ENCODE measurements at regions of chr9 and their contacts with region 1.

Region 1: GRCh38 chr9:100098887-100099721 is at the starts of genes ERP44 and INVS:
- DNase-seq: peak; percentile 82 to 98 (median 94)
- ATAC-seq: peak; percentile 99
- H3K4me3 ChIP-seq: peak within 1 kb of the TSS; percentile 93
- H3K4me3 Mint-ChIP-seq: peak within 1 kb of the TSS; percentile 94 to 100 (median 98)
- H3K27ac ChIP-seq: peak within 1 kb of the TSS; percentile 89
- H3K27ac Mint-ChIP-seq: peak within 1 kb of the TSS; percentile 84 to 99 (median 97)
- H3K4me1 ChIP-seq: peaks cover 18 to 25% of the 10 kb centered on the region in 2 donors
- H3K4me1 Mint-ChIP-seq: peaks cover 26 to 53% (median 43%) of the 10 kb centered on the region in 7 donors
- H3K27me3 ChIP-seq: no peaks in the 10 kb centered on the region
- H3K27me3 Mint-ChIP-seq: no peaks in the 10 kb centered on the region
- total RNA-seq, gene ERP44: 9.8 to 19.5 (median 15.2) TPM
- total RNA-seq, gene INVS: 15.0 to 20.8 (median 20.6) TPM

Region 2: GRCh38 chr9:100028201-100028784 is 70.8 kb before region 1 on chr9:
- CTCF ChIA-PET with region 1: no interaction called
- POLR2A ChIA-PET with region 1: no interaction called
- intact Hi-C with region 1: loop called in 1 of 2 experiments (anchors 2 kb)
- DNase-seq: peak; percentile 21 to 66 (median 45)
- ATAC-seq: peak; percentile 98
- H3K4me3 ChIP-seq: no peak overlapping the region
- H3K4me3 Mint-ChIP-seq: no peak overlapping the region
- H3K27ac ChIP-seq: no peak overlapping the region
- H3K27ac Mint-ChIP-seq: peak overlapping the region in 1 of 9 donors; percentile 0
- H3K4me1 ChIP-seq: no peaks in the 10 kb centered on the region
- H3K4me1 Mint-ChIP-seq: peaks cover 4 to 12% (median 9%) of the 10 kb centered on the region in 7 donors
- H3K27me3 ChIP-seq: no peaks in the 10 kb centered on the region
- H3K27me3 Mint-ChIP-seq: no peaks in the 10 kb centered on the region

Region 3: GRCh38 chr9:100058699-100059579 is 40.2 kb before region 1 on chr9:
- CTCF ChIA-PET with region 1: no interaction called
- POLR2A ChIA-PET with region 1: no interaction called
- intact Hi-C with region 1: loop called in 1 of 2 experiments (anchors 10 kb)
- DNase-seq: no peak
- ATAC-seq: no peak
- H3K4me3 ChIP-seq: no peak overlapping the region
- H3K4me3 Mint-ChIP-seq: no peak overlapping the region
- H3K27ac ChIP-seq: no peak overlapping the region
- H3K27ac Mint-ChIP-seq: no peak overlapping the region
- H3K4me1 ChIP-seq: no peaks in the 10 kb centered on the region
- H3K4me1 Mint-ChIP-seq: peaks cover 2 to 22% (median 8%) of the 10 kb centered on the region in 7 donors
- H3K27me3 ChIP-seq: no peaks in the 10 kb centered on the region
- H3K27me3 Mint-ChIP-seq: no peaks in the 10 kb centered on the region

Region 4: DNA sequence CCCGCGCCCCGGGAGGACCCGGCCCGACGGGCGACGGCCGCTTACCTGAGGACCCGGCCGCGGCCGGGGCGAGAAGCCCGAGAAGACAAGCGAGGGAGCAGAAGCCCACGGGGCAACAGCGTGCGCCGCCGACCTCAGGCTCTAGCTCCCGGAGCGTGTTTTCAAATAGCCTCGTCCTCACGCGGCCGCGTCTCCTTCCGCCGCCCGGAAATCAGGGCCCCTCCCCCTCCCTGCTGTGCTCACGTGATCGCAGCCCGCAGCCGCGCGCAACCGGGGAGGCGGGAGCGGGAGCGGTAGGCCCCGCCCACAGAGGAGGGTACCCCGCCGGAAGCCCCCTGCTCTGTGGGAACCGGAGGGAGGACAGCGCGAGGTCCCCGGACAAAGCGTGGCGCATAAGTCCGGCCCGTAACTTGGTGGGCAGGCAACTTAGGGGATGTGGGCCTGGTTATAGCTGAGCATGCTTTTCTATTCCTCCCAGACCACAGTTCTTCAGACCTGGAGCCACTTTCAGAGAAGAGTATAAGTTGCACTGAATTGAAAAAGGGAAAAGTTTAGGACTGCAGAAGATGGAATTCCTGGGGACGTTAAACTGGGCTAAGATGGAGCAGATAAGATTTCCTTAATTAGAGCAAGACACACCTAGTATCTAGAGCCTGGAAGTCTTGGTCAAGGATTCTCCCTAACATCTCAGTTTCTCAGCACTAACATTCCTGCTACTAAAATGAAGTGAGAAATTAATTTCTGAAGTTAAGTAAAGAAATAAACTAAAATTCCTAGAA is 253.8 kb after region 1 on chr9 and contains the start of gene TEX10:
- CTCF ChIA-PET with region 1: no interaction called
- POLR2A ChIA-PET with region 1: no interaction called
- intact Hi-C with region 1: loop called (anchors 1 to 10 kb)
- DNase-seq: peak; percentile 80 to 94 (median 87)
- ATAC-seq: peak; percentile 96
- H3K4me3 ChIP-seq: peak within 1 kb of the TSS; percentile 79
- H3K4me3 Mint-ChIP-seq: peak within 1 kb of the TSS; percentile 87 to 99 (median 94)
- H3K27ac ChIP-seq: peak within 1 kb of the TSS; percentile 82
- H3K27ac Mint-ChIP-seq: peak within 1 kb of the TSS; percentile 77 to 94 (median 86)
- H3K4me1 ChIP-seq: peaks cover 8 to 22% of the 10 kb centered on the region in 2 donors
- H3K4me1 Mint-ChIP-seq: peaks cover 32 to 62% (median 53%) of the 10 kb centered on the region in 7 donors
- H3K27me3 ChIP-seq: no peaks in the 10 kb centered on the region
- H3K27me3 Mint-ChIP-seq: no peaks in the 10 kb centered on the region
- total RNA-seq, gene TEX10: 11.0 to 24.6 (median 18.2) TPM

Region 5: DNA sequence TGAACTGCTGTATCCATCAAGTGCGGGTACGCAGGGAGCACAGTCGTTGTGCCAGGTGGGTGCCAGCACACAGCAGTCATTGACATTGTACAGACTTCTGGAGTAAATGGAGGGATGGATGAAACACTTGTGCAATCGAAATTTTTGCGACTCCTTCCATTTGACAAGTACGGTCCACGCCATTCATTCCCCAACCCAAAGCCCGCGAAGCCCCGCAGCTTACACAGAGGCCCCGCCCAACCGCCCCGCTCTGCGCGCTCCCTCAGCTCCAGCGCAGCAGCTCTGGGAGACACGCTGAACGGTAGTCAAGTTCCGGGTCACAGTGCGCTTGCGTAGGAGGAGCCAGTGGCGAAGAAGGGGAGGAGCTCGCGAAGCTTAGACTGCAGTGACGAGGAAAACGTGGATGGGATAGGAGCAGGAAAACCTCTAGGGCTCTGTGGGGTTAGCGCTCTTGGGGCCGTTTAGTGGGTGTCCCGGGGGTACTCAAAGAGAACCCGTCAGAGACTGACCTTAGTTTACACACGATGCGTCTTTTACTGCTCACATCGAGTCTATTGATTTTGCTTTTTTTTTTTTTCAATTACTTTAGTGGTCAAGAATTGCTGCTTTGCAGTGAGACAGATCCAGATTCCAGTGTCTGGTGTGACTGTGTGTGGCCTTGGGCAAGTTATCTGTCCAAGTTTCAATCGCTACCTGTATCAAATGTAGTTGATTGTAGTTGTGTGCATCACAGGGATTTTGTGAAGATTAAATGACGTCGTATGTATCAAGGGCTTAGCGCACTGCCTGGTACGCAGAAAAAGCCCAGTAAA is 312.6 kb after region 1 on chr9:
- CTCF ChIA-PET with region 1: no interaction called
- POLR2A ChIA-PET with region 1: interaction called, 3 read pairs
- intact Hi-C with region 1: loop called in 1 of 2 experiments (anchors 5 kb)
- DNase-seq: peak; percentile 58 to 87 (median 80)
- ATAC-seq: peak; percentile 100
- H3K4me3 ChIP-seq: peak overlapping the region; percentile 91
- H3K4me3 Mint-ChIP-seq: peak overlapping the region; percentile 83 to 98 (median 89)
- H3K27ac ChIP-seq: peak overlapping the region; percentile 55
- H3K27ac Mint-ChIP-seq: peak overlapping the region; percentile 56 to 90 (median 84)
- H3K4me1 ChIP-seq: peaks cover 10 to 15% of the 10 kb centered on the region in 2 donors
- H3K4me1 Mint-ChIP-seq: peaks cover 10 to 16% (median 13%) of the 10 kb centered on the region in 7 donors
- H3K27me3 ChIP-seq: no peaks in the 10 kb centered on the region
- H3K27me3 Mint-ChIP-seq: peaks cover 6 to 21% (median 15%) of the 10 kb centered on the region in 5 donors